ENCODE measurements at regions of chr1 and their contacts with region 1.

Region 1: DNA sequence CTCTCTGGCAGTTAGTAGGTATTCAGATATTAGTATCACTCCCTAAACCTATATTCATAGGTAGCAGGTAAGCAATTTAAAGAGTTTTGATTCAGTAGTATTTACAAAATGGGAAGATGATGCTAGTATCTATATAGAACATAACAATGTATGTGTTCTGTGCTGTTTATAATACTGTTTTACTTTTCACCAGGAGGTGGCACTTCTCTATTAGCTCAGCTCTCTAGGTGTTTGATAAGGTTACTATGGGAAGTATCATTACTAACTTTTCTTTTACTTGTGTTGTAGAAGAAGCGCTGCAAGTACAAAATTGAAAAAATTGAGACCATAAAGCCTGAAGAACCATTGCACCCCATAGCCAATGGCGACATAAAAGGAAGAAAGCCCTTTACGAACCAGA is 49.4 kb upstream of the FASLG start:
- DNase-seq: no peak
- H3K4me3 ChIP-seq: no peak overlapping the region
- CTCF ChIP-seq: peak; percentile 6

Region 2: GRCh38 chr1:172622541-172622940 is 13.0 kb after region 1 on chr1:
- CTCF ChIA-PET with region 1: interaction called, 16 read pairs
- POLR2A ChIA-PET with region 1: no interaction called
- DNase-seq: no peak
- H3K4me3 ChIP-seq: no peak overlapping the region
- CTCF ChIP-seq: no peak

Measured in AG04449 (cell line).